Ascending aorta (tissue), 2 donors: ENCODE measurements at regions of chr10 and their contacts with region 1.

Region 1: DNA sequence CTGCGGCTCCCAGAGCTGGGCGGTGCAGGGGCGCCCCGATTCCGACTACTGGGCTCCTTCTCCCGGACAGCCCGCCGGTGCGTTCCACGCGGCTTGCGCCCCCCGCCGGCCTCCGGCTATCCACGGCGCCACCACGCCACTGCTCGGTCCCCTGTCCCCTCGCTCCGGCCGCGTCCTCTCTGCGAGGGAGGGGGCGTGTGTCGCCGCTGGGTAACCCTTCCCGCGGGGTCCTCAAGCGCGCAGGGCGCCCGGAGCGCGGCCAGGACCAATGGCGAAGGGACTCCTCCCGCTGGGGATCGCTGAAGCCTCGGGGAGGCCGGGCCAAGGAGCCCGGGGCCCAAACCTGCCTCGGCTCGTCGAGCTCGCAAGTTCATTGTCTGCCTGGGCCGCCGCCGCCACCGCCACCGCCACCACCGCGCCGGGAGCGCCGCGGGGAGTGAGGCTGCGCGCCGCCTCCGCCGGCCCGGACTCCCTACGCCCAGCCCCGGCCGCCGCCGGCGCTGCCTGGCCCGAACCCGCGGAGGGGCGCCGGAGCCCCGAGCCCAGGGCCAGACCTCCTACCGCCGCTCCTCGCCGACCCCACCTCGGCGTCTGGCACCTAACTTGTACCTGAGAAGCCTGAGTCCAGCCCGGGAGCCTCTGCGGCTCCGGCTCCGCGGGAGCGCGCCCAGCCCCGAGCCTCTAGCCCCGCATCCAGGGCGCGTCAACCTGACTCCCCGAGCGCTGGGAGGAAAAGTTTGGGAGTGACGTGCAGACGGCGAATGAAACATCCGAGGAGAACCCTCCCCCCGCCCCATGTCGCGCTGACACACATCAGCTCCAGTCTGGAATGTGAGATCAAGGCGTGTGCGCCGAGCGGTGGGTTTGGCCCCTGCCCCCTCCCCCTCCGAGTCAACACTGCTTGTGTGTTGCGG is at the start of gene CHST15:
- DNase-seq: peak in 1 of 2 donors; percentile 80
- H3K4me3 ChIP-seq: peak within 1 kb of the TSS; percentile 73 to 79
- H3K27ac ChIP-seq: peak within 1 kb of the TSS; percentile 87 to 88
- H3K4me1 ChIP-seq: peaks cover 0 to 19% of the 10 kb centered on the region in 2 donors
- H3K27me3 ChIP-seq: no peaks in the 10 kb centered on the region
- CTCF ChIP-seq: peak in 2 of 3 experiments; percentile 16 to 38
- total RNA-seq, gene CHST15: 20.4 TPM

Region 2: GRCh38 chr10:123790132-123790885 is 302.8 kb before region 1 on chr10:
- intact Hi-C with region 1: no loop called
- DNase-seq: peak in 1 of 2 donors; percentile 47
- H3K4me3 ChIP-seq: no peak overlapping the region
- H3K27ac ChIP-seq: no peak overlapping the region
- H3K4me1 ChIP-seq: no peaks in the 10 kb centered on the region
- H3K27me3 ChIP-seq: no peaks in the 10 kb centered on the region
- CTCF ChIP-seq: no peak

Region 3: GRCh38 chr10:123807444-123808035 is 285.6 kb before region 1 on chr10:
- intact Hi-C with region 1: no loop called
- DNase-seq: peak in 1 of 2 donors; percentile 33
- H3K4me3 ChIP-seq: no peak overlapping the region
- H3K27ac ChIP-seq: peak overlapping the region; percentile 41 to 44
- H3K4me1 ChIP-seq: peaks cover 0 to 17% of the 10 kb centered on the region in 2 donors
- H3K27me3 ChIP-seq: no peaks in the 10 kb centered on the region
- CTCF ChIP-seq: no peak

Region 4: GRCh38 chr10:123994417-123995081 is 98.6 kb before region 1 on chr10:
- intact Hi-C with region 1: loop called (anchors 5 kb)
- DNase-seq: peak in 1 of 2 donors; percentile 92
- H3K4me3 ChIP-seq: peak overlapping the region; percentile 23 to 56
- H3K27ac ChIP-seq: no peak overlapping the region
- H3K4me1 ChIP-seq: peaks cover 3 to 8% of the 10 kb centered on the region in 2 donors
- H3K27me3 ChIP-seq: peaks cover 14% of the 10 kb centered on the region
- CTCF ChIP-seq: peak; percentile 98 to 100 (median 98)

Region 5: GRCh38 chr10:124138195-124138882 is 45.2 kb after region 1 on chr10:
- intact Hi-C with region 1: loop called (anchors 5 kb)
- DNase-seq: peak in 1 of 2 donors; percentile 82
- H3K4me3 ChIP-seq: no peak overlapping the region
- H3K27ac ChIP-seq: peak overlapping the region; percentile 54 to 74
- H3K4me1 ChIP-seq: peaks cover 0 to 17% of the 10 kb centered on the region in 2 donors
- H3K27me3 ChIP-seq: no peaks in the 10 kb centered on the region
- CTCF ChIP-seq: no peak

Region 6: GRCh38 chr10:124185084-124185483 is 92.0 kb after region 1 on chr10:
- intact Hi-C with region 1: no loop called
- DNase-seq: peak in 1 of 2 donors; percentile 35
- H3K4me3 ChIP-seq: no peak overlapping the region
- H3K27ac ChIP-seq: no peak overlapping the region
- H3K4me1 ChIP-seq: peaks cover 0 to 2% of the 10 kb centered on the region in 2 donors
- H3K27me3 ChIP-seq: no peaks in the 10 kb centered on the region
- CTCF ChIP-seq: no peak

Region 7: GRCh38 chr10:124225467-124226270 is 132.6 kb after region 1 on chr10:
- intact Hi-C with region 1: loop called (anchors 2 kb)
- DNase-seq: peak in 1 of 2 donors; percentile 65
- H3K4me3 ChIP-seq: no peak overlapping the region
- H3K27ac ChIP-seq: peak overlapping the region; percentile 71 to 83
- H3K4me1 ChIP-seq: peaks cover 16 to 44% of the 10 kb centered on the region in 2 donors
- H3K27me3 ChIP-seq: no peaks in the 10 kb centered on the region
- CTCF ChIP-seq: no peak